GM12878 (cell line): ENCODE measurements at regions of chr22 and their contacts with region 1.

Region 1: DNA sequence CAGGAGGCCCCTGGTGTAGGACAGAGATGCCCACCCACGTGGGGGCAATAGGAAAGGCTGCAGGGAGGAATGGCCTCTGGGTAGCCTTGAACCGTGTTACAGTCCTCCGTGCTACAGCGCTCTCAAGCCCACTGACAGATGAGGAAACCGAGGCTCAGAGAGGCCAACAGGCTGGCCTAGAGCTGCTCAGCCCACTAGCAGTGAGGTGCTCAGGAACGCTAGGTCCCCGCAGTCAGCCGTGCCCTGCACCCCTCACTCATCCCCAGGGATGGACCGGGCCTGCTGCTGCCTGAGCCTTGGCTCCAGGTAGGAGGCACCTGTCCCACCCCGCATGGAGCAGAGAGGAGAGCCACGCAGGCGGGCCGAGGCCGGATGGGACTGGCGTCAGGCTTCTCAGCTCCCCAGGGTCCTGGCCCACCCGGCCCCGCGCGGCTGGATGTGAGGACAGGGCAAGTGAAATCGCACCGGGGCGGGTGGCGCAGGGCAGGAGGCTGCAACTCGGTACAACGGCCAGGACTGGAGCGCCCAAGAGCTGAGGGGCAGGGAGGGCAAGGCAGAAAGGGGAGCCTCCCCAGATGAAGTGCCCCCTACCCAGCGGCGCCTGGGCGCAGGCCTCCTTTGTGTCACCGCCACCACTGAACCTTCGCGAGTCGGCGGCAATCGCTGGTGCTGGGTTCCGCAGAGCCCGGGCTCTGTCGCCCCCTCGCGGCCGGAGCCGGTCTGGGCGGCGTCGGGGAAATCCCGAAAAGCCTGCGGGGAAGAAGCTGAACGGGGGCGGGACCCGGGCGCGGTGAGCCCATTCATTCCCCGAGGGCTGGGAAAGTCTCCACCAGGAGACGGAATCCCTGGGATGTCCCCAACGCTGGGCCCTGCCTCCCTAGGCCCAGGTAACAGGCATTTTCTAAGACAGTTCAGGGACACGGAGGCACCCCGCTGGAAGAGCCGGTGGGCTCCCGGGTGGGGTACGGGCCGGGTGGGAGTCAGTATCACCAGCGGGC is 8.4 kb upstream of the SLC2A11 start:
- DNase-seq: no peak
- ATAC-seq: peak; percentile 87
- H3K4me3 ChIP-seq: peak overlapping the region; percentile 60; the same call in 1 of the 2 replicates
- H3K27ac ChIP-seq: no peak overlapping the region
- H3K4me1 ChIP-seq: peaks cover 60% of the 10 kb centered on the region
- H3K27me3 ChIP-seq: no peaks in the 10 kb centered on the region
- CTCF ChIP-seq: peak; percentile 94 to 98 (median 97); a peak in 5 of 6 replicates
- EP300 ChIP-seq: no peak
- POLR2A ChIP-seq: no peak
- RAD21 ChIP-seq: peak; percentile 99

Region 2: DNA sequence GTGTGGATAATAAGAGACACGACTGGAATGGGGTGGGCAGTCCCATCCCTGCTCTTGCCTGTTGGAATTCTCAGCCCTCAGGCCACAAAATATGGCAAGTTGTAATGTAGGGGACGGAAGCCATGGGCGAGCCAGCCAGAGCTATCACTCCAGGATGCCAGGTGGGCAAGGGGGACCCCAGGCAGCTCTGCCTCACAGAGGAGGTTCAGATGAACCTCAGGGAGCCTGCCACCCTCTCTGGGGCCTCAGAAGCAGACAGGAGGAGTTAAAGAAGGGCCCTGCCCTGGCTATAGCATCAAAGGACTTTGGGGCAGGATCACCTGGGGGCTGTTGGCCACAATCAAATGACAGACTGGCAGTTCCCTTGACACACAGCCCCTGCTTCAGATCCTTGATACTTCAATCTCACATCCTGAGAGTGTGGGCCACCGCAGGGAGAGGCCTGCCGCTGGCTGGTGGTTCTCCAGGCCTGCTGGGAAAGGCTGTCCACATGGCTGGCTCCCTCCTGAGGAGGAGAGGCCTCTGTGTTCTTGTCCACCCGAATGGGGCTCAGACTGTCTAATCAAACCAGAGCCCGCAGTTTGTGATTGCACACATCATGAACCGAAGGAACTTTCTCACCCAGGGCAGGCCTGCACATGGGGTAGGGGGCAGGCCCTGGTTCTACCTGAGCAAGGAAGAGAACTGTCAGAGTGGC is 300.7 kb before region 1 on chr22:
- CTCF ChIA-PET with region 1: no interaction called
- POLR2A ChIA-PET with region 1: no interaction called
- RAD21 ChIA-PET with region 1: interaction called, 5 read pairs
- SMC1A ChIA-PET with region 1: interaction called, 5 read pairs
- in situ Hi-C with region 1: loop called (anchors 5 kb)
- intact Hi-C with region 1: loop called (anchors 2 kb)
- DNase-seq: no peak
- ATAC-seq: no peak
- H3K4me3 ChIP-seq: no peak overlapping the region
- H3K27ac ChIP-seq: no peak overlapping the region
- H3K4me1 ChIP-seq: no peaks in the 10 kb centered on the region
- H3K27me3 ChIP-seq: no peaks in the 10 kb centered on the region; a peak in 1 of 4 replicates
- CTCF ChIP-seq: no peak
- EP300 ChIP-seq: no peak
- POLR2A ChIP-seq: no peak
- RAD21 ChIP-seq: no peak

Region 3: GRCh38 chr22:23737696-23738095 is 111.6 kb before region 1 on chr22:
- CTCF ChIA-PET with region 1: interaction called, 12 read pairs
- POLR2A ChIA-PET with region 1: no interaction called
- RAD21 ChIA-PET with region 1: interaction called, 3 read pairs
- SMC1A ChIA-PET with region 1: no interaction called
- in situ Hi-C with region 1: no loop called
- intact Hi-C with region 1: no loop called
- DNase-seq: no peak
- ATAC-seq: no peak
- H3K4me3 ChIP-seq: no peak overlapping the region
- H3K27ac ChIP-seq: no peak overlapping the region
- H3K4me1 ChIP-seq: no peaks in the 10 kb centered on the region
- H3K27me3 ChIP-seq: no peaks in the 10 kb centered on the region
- CTCF ChIP-seq: no peak
- EP300 ChIP-seq: no peak
- POLR2A ChIP-seq: no peak
- RAD21 ChIP-seq: no peak

Region 4: DNA sequence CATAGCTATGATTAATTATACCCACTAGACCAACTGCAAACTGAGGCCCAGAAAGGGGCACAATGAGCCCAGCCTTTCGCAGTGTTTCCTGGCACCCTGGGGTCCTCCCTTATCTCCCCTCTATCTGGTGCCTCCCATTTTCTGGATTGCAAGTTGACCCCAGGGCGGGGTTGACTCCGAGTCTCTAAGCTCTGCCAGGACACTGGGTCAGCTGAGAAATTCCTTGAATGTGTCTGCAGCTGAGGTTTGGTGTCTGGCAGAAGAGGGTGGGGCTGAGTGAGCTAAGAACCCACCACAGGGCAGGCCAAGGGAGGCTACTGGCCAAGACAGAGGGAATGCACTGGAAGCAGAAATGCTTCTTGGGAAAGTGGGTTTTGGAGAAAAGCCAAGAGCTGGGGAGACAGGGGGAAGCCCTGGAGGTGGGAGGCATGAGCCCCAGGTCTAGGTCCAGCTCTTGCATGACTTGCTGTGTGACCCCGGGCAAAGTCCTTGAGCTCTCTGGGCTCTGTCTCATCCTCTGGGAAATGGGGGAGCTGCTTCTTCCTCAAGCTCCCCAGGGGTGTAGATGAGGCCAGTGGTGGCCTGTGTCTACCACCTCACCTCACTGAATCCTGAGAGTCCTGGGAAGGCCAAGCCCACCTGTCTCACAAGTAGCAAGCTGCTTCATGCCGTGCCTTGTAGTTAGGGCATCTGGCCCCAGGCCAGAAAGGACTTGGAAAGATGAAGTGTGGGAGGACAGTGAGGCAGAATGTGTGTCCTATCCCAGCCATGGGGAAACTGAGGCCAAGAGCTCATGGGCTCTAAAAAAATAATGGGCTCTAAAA is 74.4 kb before region 1 on chr22:
- CTCF ChIA-PET with region 1: interaction called, 197 read pairs
- POLR2A ChIA-PET with region 1: interaction called, 18 read pairs
- RAD21 ChIA-PET with region 1: interaction called, 38 read pairs
- SMC1A ChIA-PET with region 1: interaction called, 40 read pairs
- in situ Hi-C with region 1: no loop called
- intact Hi-C with region 1: no loop called
- DNase-seq: no peak
- ATAC-seq: no peak
- H3K4me3 ChIP-seq: no peak overlapping the region
- H3K27ac ChIP-seq: no peak overlapping the region
- H3K4me1 ChIP-seq: peaks cover 8% of the 10 kb centered on the region
- H3K27me3 ChIP-seq: peaks cover under 1 to 2% of the 10 kb centered on the region in 2 experiments; a peak in 2 of 4 replicates
- CTCF ChIP-seq: no peak
- EP300 ChIP-seq: no peak
- POLR2A ChIP-seq: no peak
- RAD21 ChIP-seq: no peak

Region 5: GRCh38 chr22:23882370-23882769 is 33.1 kb after region 1 on chr22:
- CTCF ChIA-PET with region 1: no interaction called
- POLR2A ChIA-PET with region 1: no interaction called
- RAD21 ChIA-PET with region 1: no interaction called
- SMC1A ChIA-PET with region 1: no interaction called
- in situ Hi-C with region 1: no loop called
- intact Hi-C with region 1: no loop called
- DNase-seq: no peak
- ATAC-seq: no peak
- H3K4me3 ChIP-seq: no peak overlapping the region
- H3K27ac ChIP-seq: no peak overlapping the region
- H3K4me1 ChIP-seq: no peaks in the 10 kb centered on the region
- H3K27me3 ChIP-seq: no peaks in the 10 kb centered on the region
- CTCF ChIP-seq: no peak
- EP300 ChIP-seq: no peak
- POLR2A ChIP-seq: no peak
- RAD21 ChIP-seq: no peak

Region 6: GRCh38 chr22:23893943-23894709 is 44.8 kb after region 1 on chr22 and contains the start of gene MIF:
- CTCF ChIA-PET with region 1: interaction called, 8 read pairs
- POLR2A ChIA-PET with region 1: interaction called, 13 read pairs
- RAD21 ChIA-PET with region 1: interaction called, 4 read pairs
- SMC1A ChIA-PET with region 1: interaction called, 5 read pairs
- in situ Hi-C with region 1: no loop called
- intact Hi-C with region 1: no loop called
- DNase-seq: peak; percentile 82
- ATAC-seq: peak; percentile 89
- H3K4me3 ChIP-seq: peak within 1 kb of the TSS; percentile 98
- H3K27ac ChIP-seq: peak within 1 kb of the TSS; percentile 92
- H3K4me1 ChIP-seq: peaks cover 12% of the 10 kb centered on the region
- H3K27me3 ChIP-seq: no peaks in the 10 kb centered on the region
- CTCF ChIP-seq: peak; percentile 61 to 94 (median 80)
- EP300 ChIP-seq: peak in 1 of 2 experiments; percentile 13; a peak in 1 of 4 replicates
- POLR2A ChIP-seq: peak; percentile 89
- RAD21 ChIP-seq: peak; percentile 31; the same call in 1 of the 2 replicates
- polyA plus RNA-seq, gene MIF: 188 to 220 TPM